Naive thymus-derived CD4-positive, alpha-beta T cell (primary cell): ENCODE measurements at regions of chr3 and their contacts with region 1.

Region 1: GRCh38 chr3:138946181-138947059 is 517 bp downstream of the FOXL2 start:
- DNase-seq: peak in 1 of 9 donors; percentile 18
- ATAC-seq: peak; percentile 22
- H3K4me3 ChIP-seq: peak overlapping the region; percentile 57
- H3K4me3 Mint-ChIP-seq: peak overlapping the region; percentile 34 to 92 (median 71)
- H3K27ac ChIP-seq: no peak overlapping the region
- H3K27ac Mint-ChIP-seq: peak overlapping the region in 1 of 9 donors; percentile 46
- H3K4me1 ChIP-seq: peaks cover 6 to 19% of the 10 kb centered on the region in 2 donors
- H3K4me1 Mint-ChIP-seq: peaks cover 26 to 55% (median 39%) of the 10 kb centered on the region in 7 donors
- H3K27me3 ChIP-seq: peaks cover 5 to 64% of the 10 kb centered on the region in 2 donors
- H3K27me3 Mint-ChIP-seq: peaks cover 74 to 90% (median 79%) of the 10 kb centered on the region in 5 donors

Region 2: GRCh38 chr3:137768361-137769321 is 1177.8 kb before region 1 on chr3:
- CTCF ChIA-PET with region 1: no interaction called
- POLR2A ChIA-PET with region 1: no interaction called
- intact Hi-C with region 1: loop called in 1 of 2 experiments (anchors 5 kb)
- DNase-seq: no peak
- ATAC-seq: no peak
- H3K4me3 ChIP-seq: no peak overlapping the region
- H3K4me3 Mint-ChIP-seq: peak overlapping the region in 3 of 10 donors; percentile 29 to 58 (median 40)
- H3K27ac ChIP-seq: no peak overlapping the region
- H3K27ac Mint-ChIP-seq: no peak overlapping the region
- H3K4me1 ChIP-seq: peaks cover 0 to 3% of the 10 kb centered on the region in 2 donors
- H3K4me1 Mint-ChIP-seq: peaks cover 4 to 26% (median 14%) of the 10 kb centered on the region in 7 donors
- H3K27me3 ChIP-seq: peaks cover 6 to 20% of the 10 kb centered on the region in 2 donors
- H3K27me3 Mint-ChIP-seq: peaks cover 65 to 95% (median 84%) of the 10 kb centered on the region in 5 donors

Region 3: GRCh38 chr3:139677388-139678155 is 731.2 kb after region 1 on chr3 and contains the start of gene NMNAT3:
- CTCF ChIA-PET with region 1: no interaction called
- POLR2A ChIA-PET with region 1: no interaction called
- intact Hi-C with region 1: loop called in 1 of 2 experiments (anchors 5 kb)
- DNase-seq: peak; percentile 65 to 84 (median 79)
- ATAC-seq: peak; percentile 99
- H3K4me3 ChIP-seq: peak within 1 kb of the TSS; percentile 73
- H3K4me3 Mint-ChIP-seq: peak within 1 kb of the TSS; percentile 76 to 88 (median 86)
- H3K27ac ChIP-seq: peak within 1 kb of the TSS; percentile 78
- H3K27ac Mint-ChIP-seq: peak within 1 kb of the TSS in 6 of 9 donors; percentile 31 to 80 (median 52)
- H3K4me1 ChIP-seq: peaks cover 0 to 7% of the 10 kb centered on the region in 2 donors
- H3K4me1 Mint-ChIP-seq: peaks cover 6 to 23% (median 14%) of the 10 kb centered on the region in 7 donors
- H3K27me3 ChIP-seq: no peaks in the 10 kb centered on the region
- H3K27me3 Mint-ChIP-seq: peaks cover 0 to 14% (median 0%) of the 10 kb centered on the region in 5 donors
- total RNA-seq, gene NMNAT3: 0.56 to 7.4 (median 4.5) TPM